ENCODE measurements at regions of chr5 and their contacts with region 1.

Region 1: GRCh38 chr5:178859625-178860531 is at the start of gene ZNF354B:
- DNase-seq: peak; percentile 54 to 93 (median 81)
- ATAC-seq: peak; percentile 96
- H3K4me3 ChIP-seq: peak within 1 kb of the TSS; percentile 60 to 95
- H3K4me3 Mint-ChIP-seq: peak within 1 kb of the TSS; percentile 90
- H3K27ac ChIP-seq: peak within 1 kb of the TSS; percentile 34 to 55
- H3K27ac Mint-ChIP-seq: peak within 1 kb of the TSS; percentile 90
- H3K4me1 ChIP-seq: peaks cover 15% of the 10 kb centered on the region
- H3K4me1 Mint-ChIP-seq: peaks cover 31% of the 10 kb centered on the region
- H3K27me3 ChIP-seq: no peaks in the 10 kb centered on the region
- H3K27me3 Mint-ChIP-seq: no peaks in the 10 kb centered on the region
- CTCF ChIP-seq: no peak
- total RNA-seq, gene ZNF354B: 4.6 to 6.1 TPM

Region 2: GRCh38 chr5:179060116-179061008 is 200.5 kb after region 1 on chr5 and contains the start of gene ZNF354C:
- CTCF ChIA-PET with region 1: no interaction called
- POLR2A ChIA-PET with region 1: interaction called, 18 read pairs
- intact Hi-C with region 1: loop called (anchors 1 kb)
- DNase-seq: peak; percentile 64 to 92 (median 88)
- ATAC-seq: peak; percentile 98
- H3K4me3 ChIP-seq: peak within 1 kb of the TSS; percentile 76 to 80
- H3K4me3 Mint-ChIP-seq: peak within 1 kb of the TSS; percentile 95
- H3K27ac ChIP-seq: peak within 1 kb of the TSS; percentile 64 to 76
- H3K27ac Mint-ChIP-seq: peak within 1 kb of the TSS; percentile 92
- H3K4me1 ChIP-seq: peaks cover 15% of the 10 kb centered on the region
- H3K4me1 Mint-ChIP-seq: peaks cover 30% of the 10 kb centered on the region
- H3K27me3 ChIP-seq: no peaks in the 10 kb centered on the region
- H3K27me3 Mint-ChIP-seq: peaks cover 8% of the 10 kb centered on the region
- CTCF ChIP-seq: no peak
- total RNA-seq, gene ZNF354C: 2.4 to 2.7 TPM

Measured in CD8-positive, alpha-beta T cell (primary cell).